Brain microvascular endothelial cell (primary cell): ENCODE measurements at regions of chr6 and their contacts with region 1.

Region 1: DNA sequence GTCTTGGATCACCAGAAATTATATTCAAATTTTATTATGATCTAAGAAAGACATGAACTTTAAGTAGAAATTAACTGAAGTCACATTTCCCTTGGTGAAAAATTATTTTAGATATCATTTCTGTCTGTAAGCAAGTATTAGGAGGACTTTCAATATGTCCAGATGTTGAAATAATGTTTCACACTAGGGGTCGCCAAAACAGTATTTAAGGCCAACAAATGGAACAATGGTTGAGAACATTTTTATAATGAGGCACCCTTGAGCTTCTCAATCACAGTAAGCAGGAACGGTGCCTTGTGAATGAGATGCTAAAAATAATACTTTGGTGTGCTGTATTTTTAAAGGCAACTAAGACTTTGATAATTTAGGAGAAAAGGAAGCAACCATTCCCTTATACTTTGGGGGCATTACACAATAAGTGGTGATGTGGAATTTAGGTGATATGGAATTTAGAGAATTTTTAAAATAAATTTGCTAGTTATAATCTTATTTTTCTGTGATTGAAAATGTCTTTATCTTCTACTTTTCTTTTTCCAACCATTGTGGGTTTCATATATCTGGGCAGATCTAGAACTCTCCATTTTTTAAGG is 9.6 kb upstream of the SF3B5 start:
- DNase-seq: peak; percentile 69
- H3K4me3 ChIP-seq: no peak overlapping the region
- H3K27ac ChIP-seq: no peak overlapping the region
- H3K27me3 ChIP-seq: no peaks in the 10 kb centered on the region
- CTCF ChIP-seq: peak; percentile 48

Region 2: DNA sequence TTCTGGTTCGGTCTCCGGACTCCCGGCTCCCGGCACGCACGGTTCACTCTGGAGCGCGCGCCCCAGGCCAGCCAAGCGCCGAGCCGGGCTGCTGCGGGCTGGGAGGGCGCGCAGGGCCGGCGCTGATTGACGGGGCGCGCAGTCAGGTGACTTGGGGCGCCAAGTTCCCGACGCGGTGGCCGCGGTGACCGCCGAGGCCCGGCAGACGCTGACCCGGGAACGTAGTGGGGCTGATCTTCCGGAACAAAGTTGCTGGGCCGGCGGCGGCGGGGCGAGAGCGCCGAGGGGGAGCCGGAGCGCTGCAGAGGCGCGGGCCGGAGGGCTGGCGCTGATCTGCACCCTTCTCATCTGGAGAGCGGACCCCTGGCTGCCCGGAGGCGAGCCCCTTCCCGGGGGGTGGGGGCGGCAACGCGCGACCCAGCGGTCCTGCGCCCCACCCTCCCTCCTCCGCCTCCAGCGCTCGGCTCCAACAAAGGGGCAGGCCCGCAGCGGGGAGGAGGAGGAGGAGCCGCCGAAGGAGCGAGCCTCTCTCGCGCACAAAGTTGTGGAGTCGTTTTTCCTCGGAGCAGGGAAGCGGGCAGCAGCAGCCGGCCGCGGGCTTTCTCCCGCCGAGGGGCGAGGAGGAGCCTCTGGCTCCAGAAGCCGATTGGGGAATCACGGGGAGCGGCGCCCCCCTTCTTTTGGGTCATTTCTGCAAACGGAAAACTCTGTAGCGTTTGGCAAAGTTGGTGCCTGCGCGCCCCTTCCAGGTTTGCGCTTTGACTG is 180.0 kb after region 1 on chr6 and contains the start of gene UTRN:
- in situ Hi-C with region 1: loop called (anchors 25 kb)
- DNase-seq: peak; percentile 77
- H3K4me3 ChIP-seq: peak within 1 kb of the TSS; percentile 85
- H3K27ac ChIP-seq: peak within 1 kb of the TSS; percentile 72
- H3K27me3 ChIP-seq: no peaks in the 10 kb centered on the region
- CTCF ChIP-seq: no peak

Region 3: GRCh38 chr6:144482142-144482541 is 377.1 kb after region 1 on chr6:
- in situ Hi-C with region 1: loop called (anchors 25 kb)
- DNase-seq: peak; percentile 78
- H3K4me3 ChIP-seq: no peak overlapping the region
- H3K27ac ChIP-seq: no peak overlapping the region
- H3K27me3 ChIP-seq: no peaks in the 10 kb centered on the region
- CTCF ChIP-seq: peak; percentile 80